Dendritic cell treated with granulocyte-macrophage colony-stimulating factor and Interleukin-4, amounts not matched to agents 40 ng/mL and 50 ng/mL, for 4 days (primary cell): ENCODE measurements at regions of chrX and their contacts with region 1.

Region 1: DNA sequence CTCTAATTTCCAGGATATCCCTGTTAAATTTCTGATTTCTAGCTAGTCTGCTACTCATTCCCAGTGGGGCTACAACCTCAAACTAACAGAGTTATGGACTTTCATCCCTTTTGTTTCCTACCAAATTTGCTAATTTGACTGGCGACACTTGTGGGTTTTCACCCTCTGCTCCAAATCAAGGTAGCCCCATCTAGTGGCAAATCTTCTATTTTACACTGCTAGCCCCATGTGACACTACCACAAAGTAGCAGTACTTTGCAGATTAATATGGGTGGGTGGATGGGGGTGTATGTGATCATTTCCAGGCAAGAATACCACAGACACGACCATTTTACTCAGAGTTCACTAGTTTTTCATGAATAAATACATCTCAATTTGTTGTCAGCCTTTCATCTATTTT is 150.3 kb downstream of the MSL3 start:
- H3K4me3 Mint-ChIP-seq: no peak overlapping the region
- H3K27ac Mint-ChIP-seq: no peak overlapping the region
- H3K4me1 Mint-ChIP-seq: peaks cover 7% of the 10 kb centered on the region
- H3K27me3 Mint-ChIP-seq: peaks cover 1% of the 10 kb centered on the region

Region 2: DNA sequence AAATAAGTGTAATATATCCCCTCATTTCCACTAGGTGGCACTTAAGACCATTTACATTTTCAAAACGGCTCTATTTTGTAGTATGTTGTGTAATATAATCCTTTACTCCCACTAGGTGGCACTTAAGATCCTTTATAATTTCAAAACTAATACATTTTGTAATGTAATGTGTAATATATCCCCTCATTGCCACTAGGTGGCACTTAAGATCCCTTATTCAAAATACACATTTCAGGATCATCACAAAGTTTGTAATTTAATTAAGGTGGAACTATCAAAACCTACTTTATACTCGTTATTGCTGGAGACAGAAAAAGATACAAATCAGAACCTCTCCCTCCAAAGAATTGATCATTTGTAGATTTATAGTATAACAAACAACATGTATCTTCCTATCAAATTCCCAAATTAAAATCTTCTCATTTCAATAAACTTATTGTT is 375.1 kb before region 1 on chrX:
- intact Hi-C with region 1: loop called (anchors 10 kb)
- H3K4me3 Mint-ChIP-seq: no peak overlapping the region
- H3K27ac Mint-ChIP-seq: no peak overlapping the region
- H3K4me1 Mint-ChIP-seq: no peaks in the 10 kb centered on the region
- H3K27me3 Mint-ChIP-seq: peaks cover 2% of the 10 kb centered on the region

Region 3: GRCh38 chrX:11789809-11790208 is 118.6 kb before region 1 on chrX:
- intact Hi-C with region 1: loop called (anchors 2 kb)
- H3K4me3 Mint-ChIP-seq: no peak overlapping the region
- H3K27ac Mint-ChIP-seq: no peak overlapping the region
- H3K4me1 Mint-ChIP-seq: no peaks in the 10 kb centered on the region
- H3K27me3 Mint-ChIP-seq: peaks cover 7% of the 10 kb centered on the region